Activated naive CD4-positive, alpha-beta T cell treated with anti-CD3 and anti-CD28 coated beads for 36 hours (primary cell): ENCODE measurements at regions of chr11 and their contacts with region 1.

Region 1: GRCh38 chr11:77269484-77270123 is 31.9 kb downstream of the GDPD4 start:
- DNase-seq: no peak
- H3K4me3 Mint-ChIP-seq: no peak overlapping the region
- H3K27ac Mint-ChIP-seq: peak overlapping the region; percentile 31
- H3K4me1 Mint-ChIP-seq: peaks cover 13% of the 10 kb centered on the region
- H3K27me3 Mint-ChIP-seq: peaks cover 2% of the 10 kb centered on the region

Region 2: DNA sequence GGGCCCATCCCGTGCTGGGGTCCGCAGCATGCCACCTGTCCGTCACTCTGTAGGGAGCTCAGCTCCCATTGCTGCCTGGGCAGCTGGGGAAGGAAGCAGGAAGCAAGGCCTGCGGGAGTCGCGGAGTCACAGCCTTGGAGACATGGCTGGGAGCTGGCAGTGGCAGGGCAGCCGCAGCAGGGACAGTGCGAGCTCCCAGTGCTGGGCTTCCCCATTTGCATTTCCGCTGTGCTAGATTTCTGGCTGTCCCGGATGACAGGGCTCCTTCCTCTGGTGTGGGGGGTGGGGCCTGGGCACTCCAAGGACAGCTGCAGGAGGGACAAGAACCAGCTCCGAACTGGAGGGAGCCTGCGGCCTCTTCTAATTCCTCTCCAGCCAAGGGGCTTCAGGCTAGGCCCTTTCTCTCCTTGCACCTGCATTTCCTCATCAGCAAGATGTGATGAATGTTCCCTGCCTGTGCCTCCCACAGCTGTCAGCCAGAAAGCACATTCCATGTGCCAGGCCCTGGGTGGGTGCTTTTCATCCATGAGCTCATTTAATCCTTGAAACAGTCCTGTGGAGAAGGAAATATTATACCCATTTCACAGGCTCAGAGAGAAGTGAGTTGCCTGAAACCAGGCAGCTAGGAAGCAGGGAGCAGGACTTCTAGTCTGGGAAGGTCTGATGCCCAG is 93.6 kb before region 1 on chr11:
- CTCF ChIA-PET with region 1: no interaction called
- intact Hi-C with region 1: no loop called
- DNase-seq: peak; percentile 13
- H3K4me3 Mint-ChIP-seq: no peak overlapping the region
- H3K27ac Mint-ChIP-seq: no peak overlapping the region
- H3K4me1 Mint-ChIP-seq: no peaks in the 10 kb centered on the region
- H3K27me3 Mint-ChIP-seq: no peaks in the 10 kb centered on the region

Region 3: GRCh38 chr11:77223797-77224196 is 45.8 kb before region 1 on chr11:
- CTCF ChIA-PET with region 1: no interaction called
- intact Hi-C with region 1: no loop called
- DNase-seq: no peak
- H3K4me3 Mint-ChIP-seq: no peak overlapping the region
- H3K27ac Mint-ChIP-seq: no peak overlapping the region
- H3K4me1 Mint-ChIP-seq: no peaks in the 10 kb centered on the region
- H3K27me3 Mint-ChIP-seq: peaks cover 21% of the 10 kb centered on the region

Region 4: DNA sequence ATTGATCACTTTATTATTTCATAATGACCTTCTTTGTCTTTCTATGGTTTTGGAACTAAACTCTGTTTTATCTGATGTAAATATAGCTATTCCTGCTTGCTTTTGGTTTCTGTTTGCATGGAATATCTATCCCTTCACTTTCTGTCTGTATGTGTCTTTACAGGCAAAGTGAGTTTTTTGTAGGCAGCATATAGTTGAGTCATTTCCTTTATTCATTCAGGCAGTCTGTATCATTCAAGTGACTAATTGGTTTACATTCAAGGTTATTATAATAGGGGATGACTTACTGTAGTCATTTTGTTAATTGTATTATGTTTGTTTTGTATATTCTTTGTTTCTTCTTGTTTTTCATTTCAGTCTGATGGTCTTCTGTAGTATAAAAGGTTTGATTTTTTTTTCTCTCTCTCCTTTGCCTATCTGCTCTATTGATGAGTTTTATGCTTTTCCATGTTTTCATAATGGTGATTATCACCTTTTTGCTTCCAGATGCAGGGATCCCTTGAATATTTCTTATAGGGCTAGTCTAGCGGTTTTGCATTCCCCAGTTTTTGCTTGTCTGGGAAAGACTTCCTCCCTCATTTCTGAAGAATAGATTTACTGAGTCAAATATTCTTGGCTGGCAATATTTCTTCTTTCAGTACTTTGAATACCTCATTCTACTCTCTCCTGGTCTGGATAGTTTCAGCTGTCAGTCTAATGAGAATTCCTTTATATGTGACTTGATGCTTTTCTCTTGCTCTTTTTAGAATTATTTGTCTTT is 18.5 kb before region 1 on chr11:
- CTCF ChIA-PET with region 1: interaction called, 4 read pairs
- intact Hi-C with region 1: loop called (anchors 1 kb)
- DNase-seq: no peak
- H3K4me3 Mint-ChIP-seq: no peak overlapping the region
- H3K27ac Mint-ChIP-seq: peak overlapping the region; percentile 48
- H3K4me1 Mint-ChIP-seq: peaks cover 27% of the 10 kb centered on the region
- H3K27me3 Mint-ChIP-seq: peaks cover 3% of the 10 kb centered on the region